ENCODE measurements at regions of chr3 and their contacts with region 1.

Region 1: DNA sequence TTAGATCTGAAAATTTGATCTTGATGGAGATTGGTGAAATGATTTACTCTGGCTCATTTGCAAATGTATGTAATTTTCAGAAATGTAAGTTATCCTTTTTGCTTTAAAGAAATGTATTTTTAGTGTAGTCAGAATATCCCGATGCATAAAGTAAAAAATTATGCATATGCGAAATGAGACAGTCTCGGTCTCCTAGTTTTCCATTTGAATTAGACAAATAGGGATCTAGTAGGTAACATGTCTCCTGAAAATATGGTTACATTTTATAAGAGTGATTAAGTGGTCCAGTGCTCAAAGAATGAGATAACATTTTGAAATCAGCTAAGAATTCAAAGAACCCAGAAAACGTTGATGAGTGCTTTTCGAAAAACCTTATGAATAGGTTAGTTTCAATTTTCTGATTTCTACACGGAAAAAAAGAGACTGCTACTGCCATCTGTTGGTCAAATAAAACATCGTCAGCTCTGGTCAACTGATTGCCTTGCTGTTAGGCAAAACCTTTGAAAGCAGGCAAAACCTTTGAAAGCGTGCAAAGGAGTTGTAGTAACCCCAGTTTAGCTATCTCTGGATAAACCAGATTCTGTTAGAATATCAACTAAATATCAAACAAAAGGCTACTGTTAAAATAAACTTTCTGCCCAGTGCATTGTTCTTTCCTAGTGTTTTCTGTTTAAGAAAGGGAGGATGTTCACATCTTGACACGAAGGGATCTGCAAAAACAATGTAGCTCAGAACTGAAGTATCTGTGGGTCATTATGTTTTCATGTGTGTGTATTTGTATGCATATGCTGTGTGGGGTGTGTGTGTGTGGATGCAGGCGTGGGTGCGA is 59.3 kb upstream of the CHMP2B start:
- DNase-seq: no peak
- H3K4me3 ChIP-seq: peak overlapping the region; percentile 42
- H3K27ac ChIP-seq: no peak overlapping the region
- H3K27me3 ChIP-seq: no peaks in the 10 kb centered on the region
- CTCF ChIP-seq: peak; percentile 71

Region 2: DNA sequence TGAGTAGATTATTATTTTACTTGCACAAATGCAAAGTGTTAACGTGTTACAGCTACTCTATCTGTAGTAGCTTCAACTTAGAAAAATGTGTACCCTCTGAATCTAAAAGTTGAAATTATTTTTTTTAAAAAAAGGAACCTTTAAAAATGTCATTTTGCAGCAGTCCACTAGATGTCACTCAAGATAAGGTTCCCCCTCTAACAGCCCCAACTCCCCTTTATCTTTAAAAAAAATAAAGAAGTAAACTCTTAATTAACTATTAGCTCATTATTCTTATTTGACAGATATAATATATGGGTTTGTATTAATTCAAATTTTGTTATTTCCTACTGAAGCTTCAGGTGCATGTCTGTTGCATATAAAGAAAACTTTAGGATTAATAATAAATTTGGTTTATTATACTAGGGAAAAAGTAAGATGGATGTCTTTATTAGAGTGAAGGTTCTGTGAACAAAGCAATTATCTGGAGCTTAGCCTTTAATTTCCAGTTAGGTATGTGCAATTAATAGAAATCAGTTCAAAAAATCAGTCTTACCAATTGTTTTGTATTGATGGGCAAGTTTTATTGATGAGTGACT is 465.4 kb before region 1 on chr3:
- CTCF ChIA-PET with region 1: interaction called, 37 read pairs
- POLR2A ChIA-PET with region 1: no interaction called
- DNase-seq: no peak
- H3K4me3 ChIP-seq: no peak overlapping the region
- H3K27ac ChIP-seq: no peak overlapping the region
- H3K27me3 ChIP-seq: no peaks in the 10 kb centered on the region
- CTCF ChIP-seq: peak; percentile 60

Region 3: GRCh38 chr3:86774082-86774691 is 393.7 kb before region 1 on chr3:
- CTCF ChIA-PET with region 1: interaction called, 134 read pairs
- POLR2A ChIA-PET with region 1: no interaction called
- DNase-seq: no peak
- H3K4me3 ChIP-seq: no peak overlapping the region
- H3K27ac ChIP-seq: no peak overlapping the region
- H3K27me3 ChIP-seq: no peaks in the 10 kb centered on the region
- CTCF ChIP-seq: peak; percentile 57

Region 4: DNA sequence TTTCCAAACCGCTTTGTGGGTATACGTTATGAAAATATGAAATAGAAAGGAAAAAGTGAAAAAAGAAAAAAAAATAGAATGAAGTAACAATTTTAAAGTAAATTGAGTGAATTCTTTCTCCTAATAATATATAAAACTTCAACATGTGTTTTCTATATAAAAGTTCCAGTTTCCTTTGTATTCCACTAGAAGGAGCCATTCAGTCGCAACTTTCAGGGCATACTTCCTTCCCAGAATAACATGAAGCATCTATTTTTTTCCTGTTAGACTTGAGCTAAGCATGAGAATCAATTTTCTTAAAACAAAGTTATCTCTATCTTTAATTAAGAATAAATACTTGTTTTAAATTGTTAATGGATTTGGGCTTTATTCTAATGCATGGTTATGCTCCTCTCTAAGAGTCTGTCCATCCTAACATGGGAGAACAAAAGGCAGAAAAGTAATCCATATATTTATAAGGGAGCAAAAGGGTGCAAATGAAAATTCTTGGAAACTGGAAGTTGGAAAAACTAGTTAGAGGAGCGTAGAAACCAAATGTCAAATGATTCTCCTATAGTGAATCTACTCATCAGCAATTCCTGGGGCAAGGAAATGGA is 160.9 kb before region 1 on chr3:
- CTCF ChIA-PET with region 1: interaction called, 12 read pairs
- POLR2A ChIA-PET with region 1: no interaction called
- DNase-seq: no peak
- H3K4me3 ChIP-seq: no peak overlapping the region
- H3K27ac ChIP-seq: no peak overlapping the region
- H3K27me3 ChIP-seq: no peaks in the 10 kb centered on the region
- CTCF ChIP-seq: peak; percentile 66

Region 5: DNA sequence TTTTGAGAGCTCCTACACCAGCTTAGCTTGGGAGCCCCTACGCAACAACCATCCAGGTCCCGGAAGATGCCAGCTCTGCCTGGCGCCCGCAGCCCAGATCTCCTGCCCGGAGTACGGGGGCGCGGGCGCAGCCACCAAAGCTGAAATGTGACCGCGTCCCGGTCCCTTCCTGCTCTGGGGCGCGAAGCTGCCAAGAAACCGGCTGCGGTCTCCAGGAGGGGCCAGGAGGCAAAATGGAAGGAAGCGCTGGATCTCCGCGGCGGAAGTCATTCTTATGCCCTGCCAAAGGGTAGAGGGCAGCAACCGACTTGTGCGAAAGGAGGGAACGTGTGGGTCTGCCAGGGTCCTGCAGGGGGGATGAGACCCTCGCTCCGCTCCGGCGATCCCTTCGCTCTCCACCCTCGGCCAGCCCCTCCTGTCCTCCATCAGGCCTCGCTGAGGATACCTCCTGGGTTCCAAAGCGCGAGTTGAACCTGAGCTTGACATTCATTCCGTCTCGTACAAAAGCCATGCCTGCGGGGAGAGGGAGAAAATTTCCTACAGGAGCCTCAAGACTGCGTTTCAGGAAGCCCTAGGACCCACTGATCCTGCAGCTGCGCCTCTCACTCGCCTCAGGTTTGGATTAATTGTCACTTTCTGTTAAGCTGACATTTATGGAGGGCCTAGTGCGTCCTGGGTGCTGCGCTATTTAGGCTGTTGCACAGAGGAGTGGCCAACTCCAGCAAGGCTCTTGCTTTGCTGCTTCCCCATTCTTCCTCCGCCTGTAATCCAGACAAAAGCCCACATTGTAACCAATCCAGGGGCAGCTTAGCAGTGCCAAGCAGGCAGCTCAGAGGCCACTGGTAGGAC is 78.6 kb before region 1 on chr3:
- CTCF ChIA-PET with region 1: interaction called, 20 read pairs
- POLR2A ChIA-PET with region 1: no interaction called
- DNase-seq: peak; percentile 46
- H3K4me3 ChIP-seq: peak overlapping the region; percentile 62
- H3K27ac ChIP-seq: peak overlapping the region; percentile 84
- H3K27me3 ChIP-seq: no peaks in the 10 kb centered on the region
- CTCF ChIP-seq: no peak

Region 6: GRCh38 chr3:87179642-87180041 is 11.8 kb after region 1 on chr3:
- CTCF ChIA-PET with region 1: interaction called, 19 read pairs
- POLR2A ChIA-PET with region 1: no interaction called
- DNase-seq: no peak
- H3K4me3 ChIP-seq: no peak overlapping the region
- H3K27ac ChIP-seq: no peak overlapping the region
- H3K27me3 ChIP-seq: no peaks in the 10 kb centered on the region
- CTCF ChIP-seq: no peak

Region 7: GRCh38 chr3:87246662-87247429 is 79.0 kb after region 1 on chr3:
- CTCF ChIA-PET with region 1: no interaction called
- POLR2A ChIA-PET with region 1: no interaction called
- DNase-seq: no peak
- H3K4me3 ChIP-seq: no peak overlapping the region
- H3K27ac ChIP-seq: no peak overlapping the region
- H3K27me3 ChIP-seq: no peaks in the 10 kb centered on the region
- CTCF ChIP-seq: no peak